ENCODE measurements at regions of chr1 and their contacts with region 1.

Region 1: DNA sequence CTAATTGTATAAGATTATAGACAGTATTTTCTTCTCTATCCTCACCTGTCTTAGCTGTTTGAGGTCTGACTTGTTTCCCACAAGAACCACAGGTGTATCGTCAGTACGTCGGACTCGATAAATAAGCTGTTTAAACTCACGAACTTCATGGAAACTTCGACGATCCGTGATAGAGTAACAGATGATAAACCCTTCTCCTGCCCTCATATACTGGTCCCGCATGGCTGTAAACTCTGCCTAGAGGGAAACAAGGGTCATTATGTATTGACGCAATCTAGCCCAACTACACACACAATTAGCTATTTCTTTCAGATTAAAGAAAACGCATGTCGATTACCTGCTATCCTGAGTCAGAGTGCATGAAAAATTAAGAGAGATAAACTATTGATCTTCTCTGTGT is 6.9 kb downstream of the RIT1 start:
- DNase-seq: no peak
- H3K4me3 Mint-ChIP-seq: no peak overlapping the region
- H3K27ac Mint-ChIP-seq: no peak overlapping the region
- H3K4me1 Mint-ChIP-seq: peaks cover 10% of the 10 kb centered on the region
- H3K27me3 Mint-ChIP-seq: no peaks in the 10 kb centered on the region

Region 2: GRCh38 chr1:155893389-155894142 is 10.7 kb before region 1 on chr1:
- CTCF ChIA-PET with region 1: interaction called, 3 read pairs
- POLR2A ChIA-PET with region 1: interaction called, 13 read pairs
- DNase-seq: peak; percentile 40
- H3K4me3 Mint-ChIP-seq: no peak overlapping the region
- H3K27ac Mint-ChIP-seq: peak overlapping the region; percentile 86
- H3K4me1 Mint-ChIP-seq: peaks cover 19% of the 10 kb centered on the region
- H3K27me3 Mint-ChIP-seq: no peaks in the 10 kb centered on the region

Measured in activated CD4-positive, alpha-beta memory T cell treated with anti-CD3 and anti-CD28 coated beads, Interleukin-2, amount 10 ng/mL, durations not matched to agents 7 days and 5 days (primary cell).